Thyroid gland (tissue), 4 donors: ENCODE measurements at regions of chr6 and their contacts with region 1.

Region 1: GRCh38 chr6:127069659-127070279 is 48.7 kb upstream of the RSPO3 start:
- DNase-seq: no peak
- H3K4me3 ChIP-seq: no peak overlapping the region
- H3K27ac ChIP-seq: no peak overlapping the region
- H3K4me1 ChIP-seq: no peaks in the 10 kb centered on the region
- H3K27me3 ChIP-seq: no peaks in the 10 kb centered on the region
- CTCF ChIP-seq: peak in 4 of 6 experiments; percentile 24 to 53 (median 48)
- POLR2A ChIP-seq: no peak

Region 2: GRCh38 chr6:126804332-126805064 is 265.3 kb before region 1 on chr6:
- intact Hi-C with region 1: loop called (anchors 10 kb)
- DNase-seq: peak; percentile 4 to 30
- H3K4me3 ChIP-seq: no peak overlapping the region
- H3K27ac ChIP-seq: no peak overlapping the region
- H3K4me1 ChIP-seq: no peaks in the 10 kb centered on the region
- H3K27me3 ChIP-seq: no peaks in the 10 kb centered on the region
- CTCF ChIP-seq: peak; percentile 48 to 76 (median 62)
- POLR2A ChIP-seq: no peak

Region 3: GRCh38 chr6:127162836-127163235 is 93.1 kb after region 1 on chr6:
- intact Hi-C with region 1: no loop called
- DNase-seq: no peak
- H3K4me3 ChIP-seq: no peak overlapping the region
- H3K27ac ChIP-seq: no peak overlapping the region
- H3K4me1 ChIP-seq: no peaks in the 10 kb centered on the region
- H3K27me3 ChIP-seq: no peaks in the 10 kb centered on the region
- CTCF ChIP-seq: no peak
- POLR2A ChIP-seq: no peak

Region 4: GRCh38 chr6:127190552-127190951 is 120.8 kb after region 1 on chr6:
- intact Hi-C with region 1: no loop called
- DNase-seq: no peak
- H3K4me3 ChIP-seq: no peak overlapping the region
- H3K27ac ChIP-seq: no peak overlapping the region
- H3K4me1 ChIP-seq: no peaks in the 10 kb centered on the region
- H3K27me3 ChIP-seq: no peaks in the 10 kb centered on the region
- CTCF ChIP-seq: peak in 2 of 6 experiments; percentile 23 to 37
- POLR2A ChIP-seq: no peak